ENCODE measurements at regions of chr12 and their contacts with region 1.

Region 1: GRCh38 chr12:113334786-113335540 is at the start of gene SLC8B1:
- DNase-seq: peak; percentile 88
- ATAC-seq: peak; percentile 100
- H3K4me3 ChIP-seq: peak within 1 kb of the TSS; percentile 74 to 96 (median 85)
- H3K4me3 Mint-ChIP-seq: peak within 1 kb of the TSS; percentile 98
- H3K27ac ChIP-seq: peak within 1 kb of the TSS in 1 of 2 donors; percentile 21
- H3K27ac Mint-ChIP-seq: peak within 1 kb of the TSS; percentile 78
- H3K4me1 ChIP-seq: peaks cover 29 to 36% of the 10 kb centered on the region in 2 donors
- H3K4me1 Mint-ChIP-seq: peaks cover 35% of the 10 kb centered on the region
- H3K27me3 ChIP-seq: no peaks in the 10 kb centered on the region
- H3K27me3 Mint-ChIP-seq: no peaks in the 10 kb centered on the region
- CTCF ChIP-seq: no peak
- total RNA-seq, gene SLC8B1: 34.1 and 35.6 TPM in 2 replicates

Region 2: DNA sequence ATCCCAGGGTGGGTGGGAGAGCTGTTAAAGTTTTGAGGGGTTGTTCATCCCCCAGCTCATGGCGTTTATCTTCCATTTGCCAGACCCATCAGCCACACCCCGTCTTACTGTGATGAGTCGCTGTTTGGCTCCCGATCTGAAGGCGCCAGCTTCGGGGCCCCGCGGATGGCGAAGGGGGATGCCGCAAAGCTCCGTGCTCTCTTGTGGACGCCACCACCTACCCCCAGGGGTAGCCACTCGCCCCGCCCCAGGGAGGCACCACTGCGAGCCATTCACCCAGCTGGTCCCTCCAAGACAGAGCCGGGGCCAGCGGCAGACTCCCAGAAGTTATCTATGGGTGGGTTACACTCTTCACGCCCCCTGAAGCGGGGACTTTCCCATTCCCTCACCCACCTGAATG is 143.7 kb before region 1 on chr12:
- CTCF ChIA-PET with region 1: no interaction called
- POLR2A ChIA-PET with region 1: no interaction called
- intact Hi-C with region 1: no loop called
- DNase-seq: no peak
- ATAC-seq: no peak
- H3K4me3 ChIP-seq: no peak overlapping the region
- H3K4me3 Mint-ChIP-seq: no peak overlapping the region
- H3K27ac ChIP-seq: no peak overlapping the region
- H3K27ac Mint-ChIP-seq: no peak overlapping the region
- H3K4me1 ChIP-seq: peaks cover 11% of the 10 kb centered on the region in 2 donors
- H3K4me1 Mint-ChIP-seq: peaks cover 16% of the 10 kb centered on the region
- H3K27me3 ChIP-seq: no peaks in the 10 kb centered on the region
- H3K27me3 Mint-ChIP-seq: no peaks in the 10 kb centered on the region
- CTCF ChIP-seq: no peak

Region 3: DNA sequence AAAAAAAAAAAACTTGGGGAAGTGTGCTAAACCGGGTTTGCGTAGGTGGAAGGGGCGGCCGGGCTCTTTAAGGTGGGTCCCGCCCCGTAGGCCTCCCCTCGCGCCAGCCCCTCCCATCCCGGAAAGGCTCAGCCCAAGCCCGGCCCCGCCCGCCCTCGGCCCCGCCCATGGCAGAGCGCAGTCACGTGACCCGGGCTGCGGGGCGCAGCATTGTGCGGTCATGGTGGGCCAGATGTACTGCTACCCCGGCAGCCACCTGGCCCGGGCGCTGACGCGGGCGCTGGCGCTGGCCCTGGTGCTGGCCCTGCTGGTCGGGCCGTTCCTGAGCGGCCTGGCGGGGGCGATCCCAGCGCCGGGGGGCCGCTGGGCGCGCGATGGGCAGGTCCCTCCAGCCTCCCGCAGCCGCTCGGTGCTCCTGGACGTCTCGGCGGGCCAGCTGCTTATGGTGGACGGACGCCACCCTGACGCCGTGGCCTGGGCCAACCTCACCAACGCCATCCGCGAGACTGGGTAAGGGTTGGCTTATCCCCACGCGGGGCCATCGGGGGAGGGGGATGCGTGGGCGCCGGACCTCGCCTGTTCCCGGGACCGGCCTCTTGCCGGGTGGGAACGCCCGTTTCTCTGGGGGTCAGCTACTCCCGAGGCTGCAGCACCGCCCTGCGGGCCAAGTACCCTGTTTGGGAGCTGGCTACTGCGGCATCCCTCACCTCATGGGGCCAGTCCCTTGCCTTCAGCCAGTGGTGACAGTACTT is 23.6 kb after region 1 on chr12 and contains the start of gene PLBD2:
- CTCF ChIA-PET with region 1: interaction called, 4 read pairs
- POLR2A ChIA-PET with region 1: no interaction called
- intact Hi-C with region 1: loop called (anchors 1 kb)
- DNase-seq: peak; percentile 97
- ATAC-seq: peak; percentile 97
- H3K4me3 ChIP-seq: peak within 1 kb of the TSS; percentile 51 to 90 (median 68)
- H3K4me3 Mint-ChIP-seq: peak within 1 kb of the TSS; percentile 91
- H3K27ac ChIP-seq: peak within 1 kb of the TSS; percentile 36 to 79
- H3K27ac Mint-ChIP-seq: peak within 1 kb of the TSS; percentile 91
- H3K4me1 ChIP-seq: peaks cover 11 to 18% of the 10 kb centered on the region in 2 donors
- H3K4me1 Mint-ChIP-seq: peaks cover 12% of the 10 kb centered on the region
- H3K27me3 ChIP-seq: peaks cover 0 to 2% (median 0%) of the 10 kb centered on the region in 4 experiments
- H3K27me3 Mint-ChIP-seq: no peaks in the 10 kb centered on the region
- CTCF ChIP-seq: no peak
- total RNA-seq, gene PLBD2: 11.6 and 14.0 TPM in 2 replicates

Region 4: DNA sequence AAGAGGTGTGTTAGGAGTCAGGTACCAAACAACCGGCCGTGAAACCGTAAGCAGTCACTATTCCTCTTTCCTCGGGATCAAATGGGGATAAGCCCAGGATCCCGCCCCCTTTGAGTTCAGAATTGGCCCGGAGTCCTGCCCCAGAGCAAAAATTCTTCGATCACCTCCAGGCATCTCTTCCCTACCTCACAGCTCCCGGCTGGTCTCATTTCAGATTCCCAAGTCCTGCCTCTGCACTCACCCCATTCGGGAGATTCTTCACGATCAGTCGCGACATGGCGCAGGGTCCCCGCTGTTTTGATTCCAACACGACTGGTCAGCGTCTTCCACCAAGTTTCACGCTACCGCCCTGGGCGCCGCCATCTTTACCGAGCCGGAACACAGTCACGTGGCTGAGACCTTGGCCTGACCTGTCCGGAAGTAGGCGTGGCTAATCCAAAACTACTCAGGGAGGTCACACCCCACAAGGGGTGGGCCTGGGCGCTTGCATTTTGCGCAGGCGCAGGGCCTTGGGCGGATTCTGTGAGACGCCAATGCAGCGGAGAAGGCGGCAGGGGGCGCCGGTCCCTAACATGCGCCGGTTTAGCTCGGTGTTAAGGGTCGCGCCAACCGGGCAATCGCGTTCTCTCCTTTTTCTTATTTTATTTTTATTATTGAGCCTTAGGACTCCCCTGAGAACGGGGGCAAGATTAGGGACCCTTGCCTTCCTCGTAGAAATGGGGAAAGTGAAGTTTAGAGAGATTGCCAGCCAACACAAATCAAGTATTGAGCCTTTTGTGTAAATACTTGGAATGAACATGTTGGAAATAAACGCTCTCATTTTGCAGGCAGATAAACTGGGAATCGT is 631.2 kb after region 1 on chr12 and contains the start of gene RBM19:
- CTCF ChIA-PET with region 1: no interaction called
- POLR2A ChIA-PET with region 1: no interaction called
- intact Hi-C with region 1: loop called (anchors 1 kb)
- DNase-seq: peak; percentile 98
- ATAC-seq: peak; percentile 99
- H3K4me3 ChIP-seq: peak within 1 kb of the TSS; percentile 81 to 99 (median 92)
- H3K4me3 Mint-ChIP-seq: peak within 1 kb of the TSS; percentile 99
- H3K27ac ChIP-seq: peak within 1 kb of the TSS; percentile 45 to 83
- H3K27ac Mint-ChIP-seq: peak within 1 kb of the TSS; percentile 96
- H3K4me1 ChIP-seq: peaks cover 17 to 21% of the 10 kb centered on the region in 2 donors
- H3K4me1 Mint-ChIP-seq: peaks cover 39% of the 10 kb centered on the region
- H3K27me3 ChIP-seq: no peaks in the 10 kb centered on the region
- H3K27me3 Mint-ChIP-seq: peaks cover 5% of the 10 kb centered on the region
- CTCF ChIP-seq: peak; percentile 98
- total RNA-seq, gene RBM19: 89.8 and 90.0 TPM in 2 replicates

Measured in B cell (primary cell).